H1 (cell line): ENCODE measurements at regions of chr12 and their contacts with region 1.

Region 1: DNA sequence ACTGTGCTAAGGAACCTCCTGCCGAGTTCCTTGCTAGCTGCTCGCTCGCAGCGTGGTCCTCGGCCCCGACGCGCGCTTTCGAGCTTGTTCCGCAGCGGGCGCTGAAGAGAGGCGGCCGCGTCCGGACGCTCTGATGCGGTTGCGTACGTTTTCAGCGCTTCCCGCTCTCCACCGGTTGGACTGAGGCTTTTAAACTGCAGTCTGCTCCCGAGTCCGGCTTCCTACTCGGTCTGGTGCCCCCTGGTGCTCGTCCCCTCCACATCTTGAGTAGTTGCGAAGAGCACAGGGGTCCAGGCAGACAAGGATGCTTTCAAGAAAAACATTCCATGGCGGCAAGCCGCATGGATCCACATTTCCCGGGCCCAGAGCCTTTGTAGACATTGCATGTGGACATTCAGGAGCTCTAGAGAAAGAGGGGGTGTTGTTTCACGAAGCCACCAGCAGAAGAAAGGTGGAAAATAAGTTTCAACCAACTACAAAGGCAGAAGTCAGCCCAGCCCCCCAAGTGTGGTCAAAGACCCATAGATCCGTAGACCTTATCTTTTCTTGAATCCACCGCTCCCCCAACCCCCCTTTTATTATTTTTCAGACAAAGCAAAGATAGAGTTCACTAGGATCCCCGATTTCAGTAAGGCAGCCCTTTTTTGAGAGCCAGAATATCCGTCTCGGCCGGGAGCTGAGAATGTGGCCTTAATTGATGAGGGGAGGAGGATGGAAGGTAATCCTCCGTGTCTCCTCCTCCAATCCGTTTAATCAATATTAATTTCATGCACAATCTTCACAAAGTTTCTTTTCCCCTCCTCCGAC is 984 bp upstream of the WNK1 start:
- DNase-seq: peak; percentile 89 to 94
- H3K4me3 ChIP-seq: peak overlapping the region; percentile 48 to 71 (median 55)
- H3K27ac ChIP-seq: peak overlapping the region; percentile 74
- H3K4me1 ChIP-seq: peaks cover 3 to 11% (median 4%) of the 10 kb centered on the region in 4 experiments; a peak in 6 of 7 replicates
- H3K27me3 ChIP-seq: no peaks in the 10 kb centered on the region
- CTCF ChIP-seq: peak; percentile 74 to 84 (median 77)
- EP300 ChIP-seq: no peak
- POLR2A ChIP-seq: peak; percentile 31 to 79
- RAD21 ChIP-seq: peak; percentile 69 to 78

Region 2: DNA sequence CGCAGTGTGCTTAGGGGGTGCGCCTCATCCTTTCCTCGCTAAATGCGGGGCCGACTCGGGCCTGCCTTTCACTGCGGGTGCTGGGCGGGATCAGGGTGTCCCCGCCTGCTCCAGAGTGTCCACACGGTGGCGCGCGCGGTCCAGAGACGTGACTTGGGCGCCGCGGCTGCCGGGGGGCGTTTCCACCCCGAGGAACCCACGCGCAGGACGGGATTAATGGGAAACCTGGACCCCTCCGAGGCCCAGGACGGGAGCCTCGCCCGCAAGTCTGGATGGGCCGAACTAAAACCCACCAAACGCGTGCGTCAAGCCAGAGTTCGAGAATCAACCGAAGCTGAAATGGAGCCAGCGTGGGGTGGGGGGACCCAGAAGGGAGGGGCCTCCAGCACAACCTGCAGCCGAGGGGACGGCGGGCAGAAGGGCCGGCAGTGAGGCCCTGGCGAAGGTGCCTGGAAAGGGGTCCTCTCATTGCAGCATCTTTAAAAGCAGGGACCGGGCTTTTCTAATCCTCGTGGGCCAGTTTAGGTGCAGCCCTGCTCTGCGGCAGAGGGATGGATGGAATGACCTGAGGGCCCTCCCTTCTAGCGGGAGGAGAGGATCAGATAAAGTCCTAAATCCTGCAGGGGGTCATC is 181.5 kb before region 1 on chr12:
- CTCF ChIA-PET with region 1: interaction called, 35 read pairs
- POLR2A ChIA-PET with region 1: interaction called, 7 read pairs
- DNase-seq: peak in 1 of 2 experiments; percentile 95
- H3K4me3 ChIP-seq: peak overlapping the region; percentile 28 to 82 (median 64)
- H3K27ac ChIP-seq: no peak overlapping the region
- H3K4me1 ChIP-seq: peaks cover 0 to 9% (median 6%) of the 10 kb centered on the region in 4 experiments; a peak in 5 of 7 replicates
- H3K27me3 ChIP-seq: peaks cover 0 to 4% (median 3%) of the 10 kb centered on the region in 4 experiments; a peak in 2 of 7 replicates
- CTCF ChIP-seq: peak in 2 of 3 experiments; percentile 86; a peak in 3 of 4 replicates
- EP300 ChIP-seq: no peak
- POLR2A ChIP-seq: no peak
- RAD21 ChIP-seq: peak; percentile 86 to 88

Region 3: GRCh38 chr12:614411-614970 is 136.9 kb before region 1 on chr12:
- CTCF ChIA-PET with region 1: interaction called, 15 read pairs
- POLR2A ChIA-PET with region 1: interaction called, 5 read pairs
- DNase-seq: peak in 1 of 2 experiments; percentile 53
- H3K4me3 ChIP-seq: no peak overlapping the region
- H3K27ac ChIP-seq: no peak overlapping the region
- H3K4me1 ChIP-seq: no peaks in the 10 kb centered on the region
- H3K27me3 ChIP-seq: no peaks in the 10 kb centered on the region
- CTCF ChIP-seq: peak; percentile 53 to 61 (median 57)
- EP300 ChIP-seq: no peak
- POLR2A ChIP-seq: no peak
- RAD21 ChIP-seq: peak; percentile 77 to 86

Region 4: GRCh38 chr12:678747-679712 is 72.4 kb before region 1 on chr12:
- CTCF ChIA-PET with region 1: no interaction called
- POLR2A ChIA-PET with region 1: no interaction called
- DNase-seq: no peak
- H3K4me3 ChIP-seq: no peak overlapping the region
- H3K27ac ChIP-seq: no peak overlapping the region
- H3K4me1 ChIP-seq: no peaks in the 10 kb centered on the region
- H3K27me3 ChIP-seq: no peaks in the 10 kb centered on the region
- CTCF ChIP-seq: no peak
- EP300 ChIP-seq: no peak
- POLR2A ChIP-seq: no peak
- RAD21 ChIP-seq: no peak

Region 5: DNA sequence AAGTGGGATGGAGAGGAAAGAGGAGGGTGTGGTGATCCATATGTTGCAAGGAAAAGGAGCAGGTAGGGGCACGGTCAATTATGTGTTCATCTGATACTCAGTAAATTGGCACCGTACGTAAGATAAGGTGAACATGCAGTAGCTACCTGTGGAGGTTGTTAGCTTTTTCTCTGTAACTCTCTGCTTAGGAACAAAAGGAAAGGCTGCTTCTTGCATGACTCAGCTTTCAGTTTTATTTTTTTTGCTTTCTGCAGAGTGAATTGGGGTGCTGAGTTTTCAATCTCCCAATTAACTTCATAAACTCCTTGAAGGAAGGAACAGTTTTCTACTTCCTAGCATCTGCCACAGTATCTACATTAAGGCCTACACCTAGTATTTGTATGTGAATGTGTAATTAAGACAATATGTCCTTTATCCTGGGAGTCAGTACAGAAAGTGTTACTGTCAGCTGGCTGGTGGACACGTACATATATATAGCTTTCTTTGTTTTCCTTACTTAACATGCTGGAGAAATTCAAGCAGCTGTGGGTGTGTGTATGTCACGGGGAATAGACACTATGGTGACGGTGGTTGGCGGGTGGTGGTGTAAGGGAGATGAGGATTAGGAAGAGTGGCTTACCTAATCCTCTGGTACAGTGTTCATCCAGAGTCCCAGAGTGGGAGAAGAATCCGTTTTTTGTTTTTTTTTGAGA is 39.1 kb before region 1 on chr12:
- CTCF ChIA-PET with region 1: interaction called, 12 read pairs
- POLR2A ChIA-PET with region 1: interaction called, 4 read pairs
- DNase-seq: no peak
- H3K4me3 ChIP-seq: no peak overlapping the region
- H3K27ac ChIP-seq: no peak overlapping the region
- H3K4me1 ChIP-seq: peaks cover 0 to 9% (median 3%) of the 10 kb centered on the region in 4 experiments; a peak in 3 of 7 replicates
- H3K27me3 ChIP-seq: no peaks in the 10 kb centered on the region
- CTCF ChIP-seq: no peak
- EP300 ChIP-seq: no peak
- POLR2A ChIP-seq: no peak
- RAD21 ChIP-seq: no peak

Region 6: GRCh38 chr12:740896-741295 is 10.5 kb before region 1 on chr12:
- CTCF ChIA-PET with region 1: interaction called, 13 read pairs
- POLR2A ChIA-PET with region 1: interaction called, 5 read pairs
- DNase-seq: no peak
- H3K4me3 ChIP-seq: no peak overlapping the region
- H3K27ac ChIP-seq: no peak overlapping the region
- H3K4me1 ChIP-seq: no peaks in the 10 kb centered on the region
- H3K27me3 ChIP-seq: no peaks in the 10 kb centered on the region
- CTCF ChIP-seq: no peak
- EP300 ChIP-seq: no peak
- POLR2A ChIP-seq: no peak
- RAD21 ChIP-seq: no peak

Region 7: GRCh38 chr12:958588-959123 is 207.3 kb after region 1 on chr12:
- CTCF ChIA-PET with region 1: no interaction called
- POLR2A ChIA-PET with region 1: no interaction called
- DNase-seq: no peak
- H3K4me3 ChIP-seq: no peak overlapping the region
- H3K27ac ChIP-seq: no peak overlapping the region
- H3K4me1 ChIP-seq: no peaks in the 10 kb centered on the region
- H3K27me3 ChIP-seq: no peaks in the 10 kb centered on the region; a peak in 1 of 7 replicates
- CTCF ChIP-seq: no peak
- EP300 ChIP-seq: no peak
- POLR2A ChIP-seq: no peak
- RAD21 ChIP-seq: no peak